Activated T-helper 1 cell treated with anti-CD3 and anti-CD28 coated beads, Interleukin-12 subunit alpha, Interleukin-12 subunit beta, Interleukin-2, Interleukin-4 antibody, amounts not matched to agents 30 ng/mL and 10 ng/mL and 1 ng/mL, durations not matched to agents 14 hours and 24 hours and 36 hours (primary cell): ENCODE measurements at regions of chr18 and their contacts with region 1.

Region 1: DNA sequence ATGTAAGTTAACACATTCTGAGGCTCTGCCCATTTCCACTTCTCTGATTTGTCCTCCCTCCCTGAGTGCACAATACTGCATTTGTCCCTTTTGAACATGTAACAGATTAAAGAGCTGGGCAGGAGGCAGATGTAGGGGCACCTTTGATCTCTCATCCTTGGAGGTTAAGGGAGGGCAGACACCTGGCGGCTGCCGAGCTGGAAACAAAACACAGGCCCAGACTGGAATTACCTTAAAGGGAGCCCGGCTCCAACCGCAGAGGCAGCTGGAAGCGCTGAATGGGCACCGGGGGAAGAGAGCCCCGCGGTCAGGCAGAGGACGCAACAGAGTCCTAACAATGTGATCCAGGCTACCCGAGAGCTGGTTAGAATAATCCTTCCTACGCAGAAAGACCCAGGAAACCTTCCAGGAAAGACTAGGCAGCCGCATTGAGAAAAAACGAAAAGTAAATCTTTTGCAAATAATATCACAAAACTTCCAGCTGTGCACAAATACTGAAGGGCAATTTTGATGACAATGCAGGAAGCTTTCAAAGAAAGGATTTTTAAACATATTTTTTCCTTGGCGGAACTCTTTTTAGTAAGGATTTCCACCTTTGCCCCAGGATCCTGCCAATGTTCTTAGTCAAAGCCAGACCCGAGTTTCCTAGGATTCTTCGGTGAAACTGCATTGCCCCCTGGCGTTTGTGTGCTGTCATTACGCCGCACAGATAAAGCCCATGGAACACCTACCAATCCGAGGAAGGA is 216.0 kb downstream of the TGIF1 start:
- DNase-seq: peak; percentile 59
- H3K4me3 Mint-ChIP-seq: peak overlapping the region; percentile 57
- H3K27ac Mint-ChIP-seq: no peak overlapping the region
- H3K4me1 Mint-ChIP-seq: peaks cover 42% of the 10 kb centered on the region
- H3K27me3 Mint-ChIP-seq: peaks cover 5% of the 10 kb centered on the region

Region 2: GRCh38 chr18:3297025-3297984 is 368.6 kb before region 1 on chr18:
- intact Hi-C with region 1: loop called (anchors 1 kb)
- DNase-seq: peak; percentile 89
- H3K4me3 Mint-ChIP-seq: peak overlapping the region; percentile 91
- H3K27ac Mint-ChIP-seq: peak overlapping the region; percentile 82
- H3K4me1 Mint-ChIP-seq: peaks cover 15% of the 10 kb centered on the region
- H3K27me3 Mint-ChIP-seq: peaks cover 33% of the 10 kb centered on the region

Region 3: DNA sequence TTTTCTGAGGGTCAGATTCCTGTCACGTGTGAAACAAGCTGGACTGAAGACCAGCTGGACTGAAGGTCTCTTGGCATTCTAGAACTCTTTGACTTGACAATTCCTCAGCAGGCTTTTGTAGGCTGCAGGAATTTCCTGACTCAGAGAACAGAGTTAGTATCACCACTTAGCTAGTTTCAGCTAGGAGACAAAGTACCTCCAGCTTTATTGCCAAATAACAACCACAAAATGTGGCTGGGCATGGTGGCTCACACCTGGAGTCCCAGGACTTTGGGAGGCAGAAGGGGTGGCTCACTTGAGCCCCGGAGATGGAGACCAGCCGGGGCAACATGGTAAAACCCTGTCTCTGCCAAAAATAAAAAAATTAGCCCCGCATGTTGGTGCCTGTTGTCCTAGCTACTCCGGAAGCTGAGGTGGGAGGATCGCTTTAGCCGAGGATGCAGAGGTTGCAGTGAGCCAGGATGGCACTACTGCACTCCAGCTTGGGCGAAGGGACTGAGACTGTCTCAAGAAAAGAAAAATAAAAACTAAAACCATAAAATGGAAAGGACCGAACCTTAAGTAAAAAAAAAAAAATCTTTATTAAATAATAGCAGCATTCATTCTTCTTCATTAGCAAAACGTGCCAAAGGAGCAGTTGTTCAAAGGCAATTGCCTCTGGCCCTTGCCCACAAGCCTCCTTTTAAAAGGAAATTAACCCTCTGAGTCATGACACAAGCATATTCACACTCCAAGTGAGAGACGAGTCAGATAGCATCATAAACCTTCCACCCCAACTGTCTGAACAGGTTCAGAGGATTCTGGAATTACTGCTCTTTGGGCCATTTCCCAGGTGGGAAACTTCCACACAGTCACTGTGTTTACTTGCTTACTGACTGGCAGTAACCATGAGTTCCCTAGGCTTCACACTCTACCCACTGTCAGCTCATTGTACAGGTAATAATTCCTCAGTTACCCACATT is 315.1 kb before region 1 on chr18:
- intact Hi-C with region 1: no loop called
- DNase-seq: no peak
- H3K4me3 Mint-ChIP-seq: no peak overlapping the region
- H3K27ac Mint-ChIP-seq: no peak overlapping the region
- H3K4me1 Mint-ChIP-seq: peaks cover 5% of the 10 kb centered on the region
- H3K27me3 Mint-ChIP-seq: no peaks in the 10 kb centered on the region

Region 4: DNA sequence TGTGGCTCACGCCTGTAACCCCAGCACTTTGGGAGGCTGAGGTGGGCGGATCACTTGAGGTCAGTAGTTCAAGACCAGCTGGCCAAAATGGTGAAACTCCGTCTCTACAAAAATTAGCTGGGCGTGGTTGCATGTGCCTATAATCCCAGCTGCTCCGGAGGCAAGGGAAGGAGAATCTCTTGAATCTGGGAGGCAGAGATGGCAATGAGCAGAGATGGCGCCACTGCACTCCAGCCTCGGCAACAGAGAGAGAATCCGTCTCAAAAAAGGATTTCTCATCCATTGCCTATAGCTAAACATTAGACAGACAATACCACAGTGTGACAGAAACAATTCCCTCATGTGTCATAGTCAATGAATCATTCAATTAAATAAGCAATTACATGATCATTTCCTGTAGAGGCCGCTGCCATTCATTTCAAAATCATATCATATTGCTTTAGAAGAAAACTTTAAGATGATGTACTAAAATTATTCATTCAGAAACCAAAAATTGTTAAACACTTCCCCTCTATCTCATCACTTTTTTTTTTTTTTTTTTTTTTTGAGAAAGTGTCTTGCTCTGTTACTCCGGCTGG is 285.5 kb before region 1 on chr18:
- intact Hi-C with region 1: loop called (anchors 2 kb)
- DNase-seq: no peak
- H3K4me3 Mint-ChIP-seq: no peak overlapping the region
- H3K27ac Mint-ChIP-seq: no peak overlapping the region
- H3K4me1 Mint-ChIP-seq: peaks cover 7% of the 10 kb centered on the region
- H3K27me3 Mint-ChIP-seq: no peaks in the 10 kb centered on the region

Region 5: GRCh38 chr18:3541549-3542386 is 124.2 kb before region 1 on chr18:
- intact Hi-C with region 1: loop called (anchors 2 kb)
- DNase-seq: no peak
- H3K4me3 Mint-ChIP-seq: peak overlapping the region; percentile 34
- H3K27ac Mint-ChIP-seq: peak overlapping the region; percentile 77
- H3K4me1 Mint-ChIP-seq: peaks cover 12% of the 10 kb centered on the region
- H3K27me3 Mint-ChIP-seq: peaks cover 10% of the 10 kb centered on the region

Region 6: GRCh38 chr18:3604498-3605408 is 61.2 kb before region 1 on chr18:
- intact Hi-C with region 1: loop called (anchors 1 kb)
- DNase-seq: peak; percentile 38
- H3K4me3 Mint-ChIP-seq: no peak overlapping the region
- H3K27ac Mint-ChIP-seq: no peak overlapping the region
- H3K4me1 Mint-ChIP-seq: peaks cover 19% of the 10 kb centered on the region
- H3K27me3 Mint-ChIP-seq: no peaks in the 10 kb centered on the region

Region 7: DNA sequence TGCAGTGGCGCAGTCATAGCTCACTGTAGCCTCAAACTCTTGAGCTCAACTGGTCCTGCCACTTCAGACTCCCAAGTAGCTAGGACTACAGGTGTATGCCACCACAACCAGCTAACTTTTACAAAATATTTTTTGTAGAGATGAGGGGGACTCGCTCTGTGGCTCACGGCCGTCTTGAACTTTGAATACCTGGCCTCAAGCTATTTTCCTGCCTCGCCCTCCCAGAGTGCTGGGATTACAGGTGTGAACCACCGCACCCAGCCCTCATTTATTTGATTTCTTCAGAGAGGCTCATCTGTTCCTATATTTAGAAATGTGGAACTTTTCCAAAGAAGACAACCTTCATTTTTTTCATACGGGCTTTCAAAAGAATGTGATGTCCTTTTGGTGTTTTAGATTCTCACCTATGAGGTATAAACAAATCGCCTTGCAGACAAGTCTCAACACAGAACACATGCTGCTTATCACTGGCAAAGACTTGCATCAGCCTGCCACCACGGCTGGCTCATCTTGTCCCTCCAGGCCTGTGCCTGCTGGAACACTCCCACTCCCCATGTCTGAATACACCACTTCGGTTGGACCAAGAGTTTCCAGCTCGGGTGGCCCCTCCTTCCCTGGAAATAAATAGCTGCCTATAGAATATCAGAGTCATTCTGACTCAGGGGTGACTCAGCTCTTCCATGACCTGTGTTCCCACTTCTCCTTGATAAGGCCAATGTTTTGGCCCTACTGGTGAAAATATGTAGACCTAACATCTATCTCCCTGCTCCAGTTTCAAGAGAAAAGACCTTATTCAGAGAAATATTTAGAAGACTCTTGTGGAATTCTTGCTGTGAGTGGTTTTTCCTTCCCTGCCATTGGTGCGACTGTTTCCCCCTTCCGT is 13.3 kb before region 1 on chr18:
- intact Hi-C with region 1: loop called (anchors 1 kb)
- DNase-seq: peak; percentile 12
- H3K4me3 Mint-ChIP-seq: peak overlapping the region; percentile 51
- H3K27ac Mint-ChIP-seq: peak overlapping the region; percentile 90
- H3K4me1 Mint-ChIP-seq: peaks cover 54% of the 10 kb centered on the region
- H3K27me3 Mint-ChIP-seq: peaks cover 2% of the 10 kb centered on the region

Region 8: DNA sequence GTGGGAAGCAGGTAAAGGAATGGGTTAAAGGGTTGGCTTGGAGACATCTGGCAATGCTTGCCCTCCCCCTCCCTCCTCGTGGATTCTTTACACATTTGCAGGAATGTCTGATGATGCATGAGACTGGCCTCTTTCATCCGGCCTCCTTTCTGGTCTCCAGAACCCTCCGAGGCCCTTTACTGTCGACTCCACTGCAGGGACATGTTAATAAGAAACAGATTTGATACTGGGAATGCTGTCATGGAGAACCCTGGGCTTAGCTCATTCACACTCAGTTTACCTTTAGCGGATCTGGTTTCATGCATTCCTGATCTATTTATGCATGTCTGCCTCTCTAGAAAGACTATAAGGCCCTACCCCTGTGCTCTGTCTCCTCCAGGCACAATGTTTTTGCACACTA is 22.7 kb after region 1 on chr18:
- intact Hi-C with region 1: no loop called
- DNase-seq: no peak
- H3K4me3 Mint-ChIP-seq: no peak overlapping the region
- H3K27ac Mint-ChIP-seq: no peak overlapping the region
- H3K4me1 Mint-ChIP-seq: no peaks in the 10 kb centered on the region
- H3K27me3 Mint-ChIP-seq: peaks cover 7% of the 10 kb centered on the region

Region 9: DNA sequence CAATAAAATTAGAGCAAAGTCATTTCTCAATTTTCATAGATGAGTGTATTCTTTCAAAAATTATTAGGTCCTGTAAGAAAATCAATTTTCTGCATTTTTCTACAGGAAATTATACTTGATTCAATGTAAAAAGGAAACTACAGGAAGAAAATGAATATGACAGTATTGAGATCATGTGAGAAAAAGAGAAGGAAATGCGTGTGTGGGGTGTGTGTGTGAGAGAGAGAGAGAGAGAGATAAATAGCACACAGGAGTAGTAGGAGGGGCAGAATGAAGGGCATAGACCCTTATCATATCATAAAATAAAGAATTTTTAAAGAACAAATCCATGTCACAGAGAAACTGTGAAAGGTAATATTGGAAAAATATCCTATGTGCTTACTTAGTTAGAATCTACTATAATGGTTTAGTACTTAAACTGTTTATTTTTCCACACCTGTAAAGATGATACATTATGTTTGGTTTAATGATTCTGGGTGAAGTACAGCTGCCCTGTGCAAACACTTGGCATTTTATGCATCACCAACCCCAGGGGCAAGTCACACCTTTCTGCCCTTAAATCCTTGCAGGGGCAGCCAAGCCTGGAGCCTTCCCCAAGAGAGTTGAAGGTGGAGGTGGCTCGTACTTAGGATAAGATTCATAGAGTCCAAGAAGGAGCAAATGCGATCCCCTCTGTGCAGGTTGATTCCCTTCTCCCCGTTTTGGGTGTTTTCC is 60.4 kb after region 1 on chr18:
- intact Hi-C with region 1: no loop called
- DNase-seq: no peak
- H3K4me3 Mint-ChIP-seq: no peak overlapping the region
- H3K27ac Mint-ChIP-seq: no peak overlapping the region
- H3K4me1 Mint-ChIP-seq: no peaks in the 10 kb centered on the region
- H3K27me3 Mint-ChIP-seq: peaks cover 18% of the 10 kb centered on the region